PC-3 (cell line): ENCODE measurements at regions of chr2 and their contacts with region 1.

Region 1: DNA sequence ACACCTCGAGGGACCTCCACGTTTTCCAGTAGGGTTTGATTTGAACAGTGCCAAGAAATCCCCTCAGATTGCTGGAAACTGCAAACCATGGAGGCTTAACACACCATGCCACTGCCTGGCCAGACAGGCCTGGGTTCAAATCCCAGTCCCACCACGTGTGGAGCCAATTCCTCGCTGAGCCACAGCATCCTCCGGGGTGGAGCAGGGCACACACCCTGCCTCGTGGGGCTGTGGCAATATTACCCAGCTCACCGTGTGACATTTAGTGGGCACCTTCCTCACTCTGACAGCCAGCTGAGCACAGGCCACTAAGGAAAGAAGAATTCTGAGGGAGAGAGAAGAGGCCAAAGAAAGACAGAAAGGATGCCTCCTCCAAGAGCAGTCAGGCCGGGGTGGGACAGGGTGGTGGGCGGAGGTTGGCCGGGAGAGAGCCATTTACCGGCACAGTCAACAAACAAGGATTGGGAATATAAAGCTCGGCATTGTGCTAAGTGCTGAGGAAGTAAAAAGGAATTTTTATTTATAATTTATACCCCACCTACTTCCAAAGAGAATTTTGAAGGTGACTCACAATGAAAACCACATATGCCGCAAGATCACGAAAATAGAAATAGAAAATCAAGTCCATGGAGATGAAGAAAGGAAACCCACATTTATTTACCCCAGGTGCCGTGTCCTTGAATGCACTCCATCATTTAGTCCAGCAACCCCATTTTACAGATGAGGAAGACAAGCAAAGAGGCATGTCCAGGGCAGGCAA is 111.5 kb downstream of the MCFD2 start:
- DNase-seq: peak; percentile 95
- ATAC-seq: peak; percentile 94
- H3K4me3 ChIP-seq: peak overlapping the region; percentile 14; the same call in 1 of the 2 replicates
- H3K27ac ChIP-seq: peak overlapping the region; percentile 99
- H3K4me1 ChIP-seq: peaks cover 58% of the 10 kb centered on the region
- H3K27me3 ChIP-seq: no peaks in the 10 kb centered on the region
- CTCF ChIP-seq: no peak

Region 2: GRCh38 chr2:46787364-46787763 is 16.7 kb before region 1 on chr2:
- CTCF ChIA-PET with region 1: no interaction called
- POLR2A ChIA-PET with region 1: interaction called, 11 read pairs
- intact Hi-C with region 1: no loop called
- DNase-seq: no peak
- ATAC-seq: no peak
- H3K4me3 ChIP-seq: no peak overlapping the region
- H3K27ac ChIP-seq: no peak overlapping the region
- H3K4me1 ChIP-seq: 0 out of 2 replicates have a peak, but pooled peaks cover 7% of the 10 kb centered on the region
- H3K27me3 ChIP-seq: no peaks in the 10 kb centered on the region
- CTCF ChIP-seq: no peak

Region 3: DNA sequence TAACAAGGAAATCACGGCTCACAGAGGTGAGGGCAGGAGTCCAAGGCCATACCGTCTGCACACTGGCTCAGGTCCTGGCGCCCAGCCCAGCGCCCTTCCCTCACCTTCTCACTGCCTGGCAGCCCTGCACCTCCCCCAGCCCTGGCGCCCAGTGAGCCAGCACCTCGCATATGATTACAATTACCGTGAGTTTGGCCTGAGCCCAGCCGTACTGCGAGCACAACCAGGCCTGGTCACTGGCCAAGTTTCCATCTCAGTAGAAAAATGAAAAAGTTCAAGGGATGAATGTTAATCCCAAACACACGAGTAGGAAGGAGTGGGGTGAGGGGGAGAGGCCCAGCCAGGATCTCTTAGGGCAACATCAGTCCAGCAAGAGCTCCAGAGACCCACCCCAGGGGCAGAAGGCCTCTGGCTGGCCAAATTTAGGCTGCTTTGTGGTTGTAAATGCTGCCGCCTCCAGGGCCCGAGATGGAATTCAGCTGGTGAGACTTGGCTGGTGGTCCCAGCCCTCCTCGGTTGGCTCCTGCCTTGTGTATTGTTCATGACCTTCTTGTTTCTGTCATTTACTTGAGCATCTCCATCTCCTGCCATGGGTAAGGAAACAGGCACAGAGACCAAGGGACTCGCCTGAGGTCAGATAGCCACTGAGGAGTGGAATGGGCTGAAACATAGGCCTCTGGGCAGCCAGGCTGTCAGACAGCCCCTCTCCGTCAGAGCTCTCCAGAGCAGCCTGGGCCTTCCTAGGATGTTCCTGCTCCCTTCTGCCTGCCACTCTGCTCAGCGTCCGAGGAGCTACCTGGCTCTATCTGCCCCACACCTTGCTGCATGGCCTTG is 43.4 kb after region 1 on chr2:
- CTCF ChIA-PET with region 1: no interaction called
- POLR2A ChIA-PET with region 1: no interaction called
- intact Hi-C with region 1: loop called (anchors 1 kb)
- DNase-seq: peak; percentile 95
- ATAC-seq: peak; percentile 73
- H3K4me3 ChIP-seq: no peak overlapping the region
- H3K27ac ChIP-seq: peak overlapping the region; percentile 70
- H3K4me1 ChIP-seq: peaks cover 59% of the 10 kb centered on the region
- H3K27me3 ChIP-seq: no peaks in the 10 kb centered on the region
- CTCF ChIP-seq: no peak

Region 4: DNA sequence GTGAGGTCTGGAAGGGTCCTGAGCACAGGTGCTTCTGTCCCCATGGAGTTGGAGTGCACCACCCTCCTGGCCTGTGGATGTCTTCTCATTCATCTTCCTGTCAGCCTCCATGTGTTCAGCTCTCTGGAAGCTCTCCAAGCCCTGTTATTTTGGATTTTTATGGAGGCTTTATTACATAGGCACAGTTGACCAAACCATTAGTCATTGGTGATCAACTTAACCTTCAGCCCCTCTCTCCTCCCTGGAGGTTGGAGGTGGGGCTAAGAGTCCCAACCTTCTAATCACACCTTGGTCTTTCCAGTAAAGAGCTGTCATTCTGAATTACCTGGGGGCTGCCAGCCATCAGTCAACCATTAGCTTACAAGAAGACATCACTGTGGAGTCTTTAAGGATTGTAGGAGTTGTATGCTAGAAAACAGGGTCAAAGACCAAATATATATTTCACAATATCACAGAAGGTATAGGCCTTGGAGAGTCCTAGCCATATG is 119.0 kb after region 1 on chr2:
- CTCF ChIA-PET with region 1: no interaction called
- POLR2A ChIA-PET with region 1: no interaction called
- intact Hi-C with region 1: no loop called
- DNase-seq: peak; percentile 96
- ATAC-seq: peak; percentile 72
- H3K4me3 ChIP-seq: no peak overlapping the region
- H3K27ac ChIP-seq: peak overlapping the region; percentile 79
- H3K4me1 ChIP-seq: peaks cover 39% of the 10 kb centered on the region
- H3K27me3 ChIP-seq: no peaks in the 10 kb centered on the region
- CTCF ChIP-seq: no peak